B cell (primary cell): ENCODE measurements at regions of chr14 and their contacts with region 1.

Region 1: DNA sequence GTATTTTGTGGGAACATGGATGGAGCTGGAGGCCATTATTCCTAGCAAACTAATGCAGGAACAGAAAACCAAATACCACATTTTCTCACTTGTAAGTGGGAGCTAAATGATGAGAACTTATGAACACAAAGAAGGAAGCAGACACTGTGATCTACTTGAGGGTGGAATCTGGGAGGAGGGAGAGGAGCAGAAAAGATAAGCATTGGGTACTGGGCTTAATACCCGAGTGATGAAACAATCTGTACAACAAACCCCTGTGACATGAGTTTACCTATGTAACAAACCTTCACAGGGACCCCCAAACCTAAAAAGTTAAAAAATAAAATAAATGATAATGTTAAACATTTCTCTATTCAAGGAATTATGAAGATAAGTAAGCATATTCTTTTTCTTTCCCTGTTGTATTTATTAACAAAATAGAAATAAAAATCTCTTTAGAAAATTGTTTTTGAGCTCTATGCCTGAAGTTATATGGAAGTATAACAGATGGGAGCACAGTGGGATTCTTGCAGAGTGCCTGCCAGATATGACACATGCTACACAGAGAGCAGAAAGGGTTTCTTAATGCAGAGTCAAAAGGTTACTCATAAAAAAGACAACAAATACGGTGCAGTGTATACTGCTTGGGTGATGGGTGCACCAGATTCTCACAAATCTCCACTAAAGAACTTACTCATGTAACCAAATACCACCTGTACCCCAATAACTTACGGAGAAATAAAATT is 52.0 kb upstream of the SYNE2 start:
- DNase-seq: no peak
- ATAC-seq: no peak
- H3K4me3 ChIP-seq: no peak overlapping the region
- H3K4me3 Mint-ChIP-seq: no peak overlapping the region
- H3K27ac ChIP-seq: no peak overlapping the region
- H3K27ac Mint-ChIP-seq: no peak overlapping the region
- H3K4me1 ChIP-seq: no peaks in the 10 kb centered on the region
- H3K4me1 Mint-ChIP-seq: peaks cover 3% of the 10 kb centered on the region
- H3K27me3 ChIP-seq: no peaks in the 10 kb centered on the region
- H3K27me3 Mint-ChIP-seq: no peaks in the 10 kb centered on the region
- CTCF ChIP-seq: no peak

Region 2: GRCh38 chr14:63759456-63759855 is 41.4 kb before region 1 on chr14:
- CTCF ChIA-PET with region 1: no interaction called
- POLR2A ChIA-PET with region 1: no interaction called
- intact Hi-C with region 1: no loop called
- DNase-seq: peak; percentile 45
- ATAC-seq: peak; percentile 63
- H3K4me3 ChIP-seq: peak overlapping the region in 2 of 5 experiments; percentile 30 to 37
- H3K4me3 Mint-ChIP-seq: peak overlapping the region; percentile 87
- H3K27ac ChIP-seq: peak overlapping the region; percentile 35 to 46
- H3K27ac Mint-ChIP-seq: peak overlapping the region; percentile 81
- H3K4me1 ChIP-seq: peaks cover 10 to 15% of the 10 kb centered on the region in 2 donors
- H3K4me1 Mint-ChIP-seq: peaks cover 19% of the 10 kb centered on the region
- H3K27me3 ChIP-seq: no peaks in the 10 kb centered on the region
- H3K27me3 Mint-ChIP-seq: no peaks in the 10 kb centered on the region
- CTCF ChIP-seq: no peak

Region 3: GRCh38 chr14:63833728-63834127 is 32.9 kb after region 1 on chr14:
- CTCF ChIA-PET with region 1: no interaction called
- POLR2A ChIA-PET with region 1: no interaction called
- intact Hi-C with region 1: no loop called
- DNase-seq: no peak
- ATAC-seq: no peak
- H3K4me3 ChIP-seq: no peak overlapping the region
- H3K4me3 Mint-ChIP-seq: no peak overlapping the region
- H3K27ac ChIP-seq: no peak overlapping the region
- H3K27ac Mint-ChIP-seq: no peak overlapping the region
- H3K4me1 ChIP-seq: no peaks in the 10 kb centered on the region
- H3K4me1 Mint-ChIP-seq: no peaks in the 10 kb centered on the region
- H3K27me3 ChIP-seq: no peaks in the 10 kb centered on the region
- H3K27me3 Mint-ChIP-seq: no peaks in the 10 kb centered on the region
- CTCF ChIP-seq: no peak

Region 4: GRCh38 chr14:63875311-63875710 is 74.5 kb after region 1 on chr14:
- CTCF ChIA-PET with region 1: no interaction called
- POLR2A ChIA-PET with region 1: no interaction called
- intact Hi-C with region 1: no loop called
- DNase-seq: no peak
- ATAC-seq: no peak
- H3K4me3 ChIP-seq: no peak overlapping the region
- H3K4me3 Mint-ChIP-seq: no peak overlapping the region
- H3K27ac ChIP-seq: no peak overlapping the region
- H3K27ac Mint-ChIP-seq: no peak overlapping the region
- H3K4me1 ChIP-seq: peaks cover 0 to 13% of the 10 kb centered on the region in 2 donors
- H3K4me1 Mint-ChIP-seq: peaks cover 26% of the 10 kb centered on the region
- H3K27me3 ChIP-seq: no peaks in the 10 kb centered on the region
- H3K27me3 Mint-ChIP-seq: no peaks in the 10 kb centered on the region
- CTCF ChIP-seq: no peak

Region 5: GRCh38 chr14:63993992-63994391 is 193.2 kb after region 1 on chr14:
- CTCF ChIA-PET with region 1: interaction called, 10 read pairs
- POLR2A ChIA-PET with region 1: no interaction called
- intact Hi-C with region 1: no loop called
- DNase-seq: no peak
- ATAC-seq: no peak
- H3K4me3 ChIP-seq: no peak overlapping the region
- H3K4me3 Mint-ChIP-seq: no peak overlapping the region
- H3K27ac ChIP-seq: no peak overlapping the region
- H3K27ac Mint-ChIP-seq: no peak overlapping the region
- H3K4me1 ChIP-seq: peaks cover 3 to 4% of the 10 kb centered on the region in 2 donors
- H3K4me1 Mint-ChIP-seq: peaks cover 8% of the 10 kb centered on the region
- H3K27me3 ChIP-seq: no peaks in the 10 kb centered on the region
- H3K27me3 Mint-ChIP-seq: no peaks in the 10 kb centered on the region
- CTCF ChIP-seq: no peak